A673 (cell line): ENCODE measurements at regions of chr5 and their contacts with region 1.

Region 1: DNA sequence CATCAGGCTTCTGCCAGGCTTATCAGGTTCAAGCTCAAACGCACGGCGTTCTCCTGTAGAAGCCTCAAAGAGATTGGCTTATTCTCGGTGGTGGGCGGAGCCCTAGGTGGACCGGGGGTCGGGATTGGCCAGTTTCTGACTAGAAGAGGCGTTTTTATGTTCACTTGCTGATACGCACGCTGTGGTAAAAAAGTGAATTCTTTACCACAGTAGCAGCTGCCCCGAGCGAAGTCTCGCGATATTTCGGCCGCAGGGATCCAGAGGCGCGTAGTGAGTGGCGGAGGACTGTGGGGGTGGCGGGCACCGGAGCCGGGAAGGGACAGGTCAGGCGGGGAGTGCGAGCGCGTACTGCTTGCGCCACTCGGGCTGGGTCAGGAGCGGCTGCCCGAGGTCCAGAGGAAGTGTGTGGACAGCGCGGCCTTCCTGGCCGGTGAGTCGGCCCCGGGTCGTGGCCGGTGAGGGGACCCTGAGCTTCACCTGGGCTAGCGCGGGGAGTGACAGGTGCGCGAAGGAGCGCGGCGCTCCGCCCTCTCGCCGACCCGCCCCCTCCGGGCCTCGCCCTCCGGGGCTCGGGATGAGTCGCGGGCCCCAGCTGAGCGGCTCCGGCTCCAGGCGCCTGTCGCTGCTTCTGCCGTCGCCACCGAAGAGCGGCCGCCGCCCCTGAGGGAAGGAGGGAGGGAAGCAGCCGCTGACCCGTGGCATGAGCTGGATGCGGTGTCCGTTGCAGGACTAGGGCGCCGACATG is at the start of gene DMXL1:
- DNase-seq: peak; percentile 99
- H3K4me3 ChIP-seq: peak within 1 kb of the TSS; percentile 97
- H3K27ac ChIP-seq: peak within 1 kb of the TSS; percentile 92
- H3K4me1 ChIP-seq: peaks cover 5% of the 10 kb centered on the region
- H3K27me3 ChIP-seq: no peaks in the 10 kb centered on the region
- CTCF ChIP-seq: no peak
- total RNA-seq, gene DMXL1: 28.4 and 30.9 TPM in 2 replicates

Region 2: DNA sequence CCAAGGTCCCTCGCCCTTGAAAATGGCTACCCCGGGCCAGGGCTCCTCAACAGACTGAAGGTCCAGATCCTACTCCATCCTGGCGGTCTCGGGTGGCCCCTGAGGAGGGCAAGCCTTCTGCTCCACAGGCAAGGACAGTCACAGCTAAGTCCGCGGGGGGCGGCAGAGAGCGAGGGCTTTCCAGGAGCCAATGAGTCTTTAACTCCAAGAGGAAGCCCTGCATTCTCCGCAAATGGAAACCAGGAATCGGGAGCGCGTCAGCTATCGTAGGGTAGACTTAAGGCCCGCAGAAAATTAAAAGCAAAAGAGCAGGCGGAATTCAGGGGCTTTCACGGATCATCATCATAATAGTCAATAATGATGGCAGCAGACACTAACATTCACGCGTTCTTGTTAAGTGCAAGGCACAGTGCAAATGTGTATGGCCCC is 197.0 kb after region 1 on chr5:
- CTCF ChIA-PET with region 1: no interaction called
- POLR2A ChIA-PET with region 1: no interaction called
- intact Hi-C with region 1: loop called (anchors 5 kb)
- DNase-seq: peak; percentile 97
- H3K4me3 ChIP-seq: peak overlapping the region; percentile 84
- H3K27ac ChIP-seq: peak overlapping the region; percentile 65
- H3K4me1 ChIP-seq: no peaks in the 10 kb centered on the region
- H3K27me3 ChIP-seq: no peaks in the 10 kb centered on the region
- CTCF ChIP-seq: peak; percentile 72

Region 3: DNA sequence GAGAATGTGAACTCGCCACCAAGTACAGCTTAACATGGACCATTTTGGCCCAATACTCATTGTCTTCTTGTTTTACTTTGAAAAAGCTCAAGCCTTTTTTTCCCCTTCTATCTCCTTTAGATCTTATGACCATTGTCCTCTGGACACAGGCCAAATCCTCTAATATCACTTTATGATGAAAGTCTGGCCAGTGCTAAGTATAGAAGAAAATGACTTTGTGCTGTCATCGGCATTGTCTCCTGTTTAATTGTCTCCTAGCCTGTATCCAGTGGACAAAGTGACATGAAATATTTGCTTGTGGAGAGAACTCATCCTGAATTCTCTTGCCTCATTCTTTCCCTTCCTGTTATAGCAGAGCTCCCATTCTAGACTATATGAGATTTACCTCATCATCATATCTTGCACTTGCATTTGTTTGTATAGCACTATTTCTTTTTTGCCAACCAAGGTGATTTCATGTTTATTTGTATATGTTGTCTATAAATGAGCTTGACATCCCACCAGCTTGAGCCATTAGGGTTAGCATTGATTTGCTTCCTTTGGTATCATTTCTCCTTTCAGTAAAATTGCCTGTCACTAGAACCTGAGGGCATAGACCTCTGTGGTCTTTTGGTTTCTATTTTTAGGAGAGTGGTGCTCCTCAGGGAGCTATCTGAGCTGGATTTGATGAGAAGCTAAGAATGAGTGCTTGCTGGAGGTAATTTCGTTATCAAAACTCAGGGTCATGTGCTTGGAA is 266.0 kb after region 1 on chr5:
- CTCF ChIA-PET with region 1: no interaction called
- POLR2A ChIA-PET with region 1: interaction called, 14 read pairs
- intact Hi-C with region 1: no loop called
- DNase-seq: no peak
- H3K4me3 ChIP-seq: no peak overlapping the region
- H3K27ac ChIP-seq: no peak overlapping the region
- H3K4me1 ChIP-seq: no peaks in the 10 kb centered on the region
- H3K27me3 ChIP-seq: no peaks in the 10 kb centered on the region
- CTCF ChIP-seq: no peak